Activated T-helper 1 cell treated with anti-CD3 and anti-CD28 coated beads, Interleukin-12 subunit alpha, Interleukin-12 subunit beta, Interleukin-2, Interleukin-4 antibody, amounts not matched to agents 30 ng/mL and 10 ng/mL and 1 ng/mL, durations not matched to agents 14 hours and 24 hours and 36 hours (primary cell): ENCODE measurements at regions of chr12 and their contacts with region 1.

Region 1: DNA sequence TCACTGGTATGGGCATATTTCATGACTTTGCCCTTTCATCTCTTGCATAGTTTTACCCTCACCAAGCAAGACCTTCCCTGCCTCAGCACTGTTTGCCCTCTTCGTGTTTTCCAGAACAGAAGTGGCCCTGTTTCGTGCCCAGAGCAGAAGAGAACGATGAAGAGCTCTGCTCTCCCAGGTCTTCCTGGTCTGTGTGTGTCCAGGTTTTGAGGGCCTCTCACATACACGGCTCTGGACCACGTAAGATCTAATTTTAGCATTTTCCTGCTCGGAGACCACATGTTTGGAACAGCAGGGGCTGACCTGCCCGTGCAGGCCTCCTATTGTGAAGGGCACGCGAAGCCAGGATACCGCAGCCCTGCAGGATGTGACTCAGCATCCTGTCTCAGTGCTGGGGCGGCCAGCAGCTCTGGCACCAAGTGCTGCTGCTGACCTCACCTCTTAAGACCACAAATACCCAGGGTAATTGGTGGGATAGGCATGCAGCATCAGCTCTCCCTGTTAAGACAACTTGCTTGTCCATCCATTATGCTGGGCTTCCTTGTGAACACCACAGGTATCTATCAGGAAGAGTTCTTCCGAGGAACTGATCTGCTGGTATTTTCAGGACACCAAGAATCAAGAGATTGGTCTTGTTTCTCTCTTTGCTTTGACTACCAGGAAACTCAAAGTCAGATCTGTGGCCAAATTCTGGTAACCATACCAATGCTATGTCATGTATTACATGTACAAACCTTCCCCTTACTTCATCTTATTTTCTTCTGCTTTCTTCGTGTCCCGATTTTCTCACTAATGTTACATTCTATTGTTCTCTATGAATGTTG is 19.0 kb downstream of the SSH1 start:
- DNase-seq: peak; percentile 70
- H3K4me3 Mint-ChIP-seq: peak overlapping the region; percentile 56
- H3K27ac Mint-ChIP-seq: peak overlapping the region; percentile 89
- H3K4me1 Mint-ChIP-seq: peaks cover 54% of the 10 kb centered on the region
- H3K27me3 Mint-ChIP-seq: peaks cover 1% of the 10 kb centered on the region

Region 2: DNA sequence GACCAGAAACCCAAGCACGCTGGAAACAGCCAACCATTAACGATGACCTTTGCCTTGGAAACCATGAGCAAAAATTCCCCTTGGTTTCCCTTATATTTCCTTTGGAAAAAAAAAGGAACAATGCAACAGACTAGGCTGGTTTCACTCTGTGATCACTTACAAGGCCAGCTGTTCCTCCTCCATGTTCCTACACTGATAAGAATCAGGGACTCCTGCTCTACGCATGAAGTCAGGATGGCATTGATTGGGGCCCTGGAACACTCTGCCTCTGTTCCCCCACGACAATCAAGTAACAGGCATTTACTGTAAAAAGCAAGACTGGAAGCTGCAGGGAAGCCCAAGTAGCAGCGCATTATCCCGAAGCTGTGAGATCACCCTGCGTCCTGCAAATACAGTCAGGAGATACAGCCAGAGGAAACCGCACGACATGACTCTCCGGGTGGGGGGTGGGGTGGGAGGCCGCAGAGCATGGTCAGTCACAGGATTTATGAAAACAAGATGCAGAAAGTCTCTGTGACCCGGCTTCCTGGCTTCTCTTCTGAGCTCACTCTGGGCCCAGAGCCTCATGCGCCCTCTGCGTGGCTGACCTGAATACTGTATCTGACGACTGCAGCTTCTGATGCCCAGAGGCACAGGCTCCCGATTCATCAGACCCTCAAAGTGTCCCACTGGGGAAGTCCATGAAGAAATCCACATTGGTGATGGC is 12.2 kb before region 1 on chr12:
- intact Hi-C with region 1: loop called (anchors 1 kb)
- DNase-seq: no peak
- H3K4me3 Mint-ChIP-seq: peak overlapping the region; percentile 48
- H3K27ac Mint-ChIP-seq: peak overlapping the region; percentile 53
- H3K4me1 Mint-ChIP-seq: peaks cover 60% of the 10 kb centered on the region
- H3K27me3 Mint-ChIP-seq: no peaks in the 10 kb centered on the region

Region 3: GRCh38 chr12:108856428-108857157 is 18.2 kb after region 1 on chr12:
- intact Hi-C with region 1: loop called (anchors 1 kb)
- DNase-seq: peak; percentile 45
- H3K4me3 Mint-ChIP-seq: peak overlapping the region; percentile 96
- H3K27ac Mint-ChIP-seq: peak overlapping the region; percentile 96
- H3K4me1 Mint-ChIP-seq: peaks cover 52% of the 10 kb centered on the region
- H3K27me3 Mint-ChIP-seq: peaks cover 10% of the 10 kb centered on the region